ENCODE measurements at regions of chr1 and their contacts with region 1.

Region 1: GRCh38 chr1:6199298-6200187 is at the start of gene RPL22:
- DNase-seq: peak; percentile 96
- H3K4me3 Mint-ChIP-seq: peak within 1 kb of the TSS; percentile 94
- H3K27ac Mint-ChIP-seq: peak within 1 kb of the TSS; percentile 92
- H3K4me1 Mint-ChIP-seq: peaks cover 44% of the 10 kb centered on the region
- H3K27me3 Mint-ChIP-seq: peaks cover 2% of the 10 kb centered on the region
- total RNA-seq, gene RPL22: 421 and 457 TPM in 2 replicates

Region 2: DNA sequence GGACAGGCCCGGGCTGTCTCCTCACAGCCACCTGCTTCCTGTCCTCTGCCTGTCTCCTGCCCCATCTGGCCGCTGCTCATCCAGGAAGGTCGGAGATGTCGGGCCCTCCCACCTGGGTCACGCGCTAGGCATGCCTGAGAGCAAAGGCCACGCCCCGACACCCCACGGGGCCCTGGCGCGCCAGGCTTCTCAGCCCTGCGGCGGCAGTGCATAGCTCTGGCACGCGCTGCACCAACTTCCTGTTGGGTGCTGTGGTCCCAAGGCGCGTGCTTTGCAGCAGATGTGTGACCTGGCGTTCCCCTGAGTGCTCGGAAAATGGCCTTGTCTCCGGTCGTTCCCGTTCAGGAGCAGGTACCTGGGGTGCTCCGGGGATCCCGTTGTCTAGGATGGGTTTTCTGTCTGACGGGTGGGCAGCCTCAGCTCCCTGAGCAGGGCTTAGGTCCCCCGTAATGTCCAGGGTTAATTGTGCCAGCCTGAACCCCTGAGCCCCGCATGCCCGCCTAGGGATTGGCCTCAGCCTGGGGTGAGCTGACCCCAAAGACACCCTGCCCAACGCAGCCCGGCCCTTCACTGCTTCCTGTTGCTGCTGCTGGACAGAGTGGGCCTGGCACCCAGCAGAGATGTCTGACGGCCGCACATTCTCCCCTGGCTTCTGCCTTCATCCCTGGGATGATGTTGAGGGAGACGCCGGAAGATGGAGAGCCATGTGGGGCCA is 173.3 kb before region 1 on chr1:
- intact Hi-C with region 1: loop called (anchors 1 kb)
- DNase-seq: peak; percentile 90
- H3K4me3 Mint-ChIP-seq: peak overlapping the region; percentile 97
- H3K27ac Mint-ChIP-seq: peak overlapping the region; percentile 94
- H3K4me1 Mint-ChIP-seq: peaks cover 50% of the 10 kb centered on the region
- H3K27me3 Mint-ChIP-seq: no peaks in the 10 kb centered on the region

Region 3: GRCh38 chr1:6059866-6060265 is 139.7 kb before region 1 on chr1:
- intact Hi-C with region 1: no loop called
- DNase-seq: no peak
- H3K4me3 Mint-ChIP-seq: no peak overlapping the region
- H3K27ac Mint-ChIP-seq: no peak overlapping the region
- H3K4me1 Mint-ChIP-seq: peaks cover 4% of the 10 kb centered on the region
- H3K27me3 Mint-ChIP-seq: peaks cover 1% of the 10 kb centered on the region

Region 4: GRCh38 chr1:6148497-6149241 is 50.9 kb before region 1 on chr1:
- intact Hi-C with region 1: loop called (anchors 1 kb)
- DNase-seq: peak; percentile 51
- H3K4me3 Mint-ChIP-seq: peak overlapping the region; percentile 47
- H3K27ac Mint-ChIP-seq: no peak overlapping the region
- H3K4me1 Mint-ChIP-seq: no peaks in the 10 kb centered on the region
- H3K27me3 Mint-ChIP-seq: peaks cover 2% of the 10 kb centered on the region

Region 5: DNA sequence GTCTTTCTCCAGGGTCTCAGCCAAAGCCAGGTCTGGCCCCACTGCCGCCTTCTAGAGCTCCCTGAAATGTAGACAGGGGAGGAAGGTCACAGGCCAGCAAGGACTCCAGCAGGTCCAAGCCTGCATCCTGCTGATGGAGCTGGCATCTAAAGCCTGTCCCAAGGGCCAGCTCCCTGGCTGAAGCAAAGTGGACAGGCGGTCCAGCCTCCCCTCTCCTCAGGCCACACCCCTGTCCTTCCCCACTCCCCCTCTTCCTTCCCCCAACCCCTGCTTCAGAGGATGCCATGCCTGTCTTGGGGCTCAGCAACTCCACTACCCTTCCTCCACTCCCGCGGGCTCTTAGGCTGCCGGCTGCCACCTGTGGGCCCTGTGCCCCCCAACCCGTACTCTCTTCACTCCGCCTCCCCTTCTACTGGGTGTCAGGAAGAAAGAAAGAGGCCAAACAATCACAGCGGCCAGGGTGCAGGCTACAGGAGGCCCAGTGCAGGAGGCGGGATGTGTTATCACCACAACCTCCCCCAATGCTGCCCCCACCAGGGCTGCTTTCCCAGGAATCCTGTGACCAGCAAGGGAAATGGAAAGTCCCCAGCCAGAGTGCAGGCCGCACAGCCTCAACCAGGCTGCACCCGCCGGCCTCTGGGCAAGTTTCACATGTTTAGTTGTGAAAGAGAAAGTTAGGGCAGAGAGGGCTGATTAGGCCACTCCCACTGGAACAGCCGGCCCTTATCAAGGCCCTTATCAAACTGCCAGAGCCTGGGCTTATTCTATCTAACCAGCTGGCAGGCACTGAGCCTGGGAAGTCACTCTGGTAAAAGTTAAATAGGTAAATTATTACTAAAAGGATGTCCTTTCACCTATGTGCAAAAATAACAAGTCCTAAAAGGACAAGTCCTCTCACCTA is 159.9 kb after region 1 on chr1:
- intact Hi-C with region 1: loop called (anchors 1 kb)
- DNase-seq: peak; percentile 57
- H3K4me3 Mint-ChIP-seq: peak overlapping the region; percentile 64
- H3K27ac Mint-ChIP-seq: peak overlapping the region; percentile 89
- H3K4me1 Mint-ChIP-seq: peaks cover 46% of the 10 kb centered on the region
- H3K27me3 Mint-ChIP-seq: no peaks in the 10 kb centered on the region

Region 6: GRCh38 chr1:6554031-6554906 is 354.7 kb after region 1 on chr1 and contains the start of gene NOL9:
- intact Hi-C with region 1: loop called (anchors 1 kb)
- DNase-seq: peak; percentile 93
- H3K4me3 Mint-ChIP-seq: peak within 1 kb of the TSS; percentile 87
- H3K27ac Mint-ChIP-seq: peak within 1 kb of the TSS; percentile 81
- H3K4me1 Mint-ChIP-seq: peaks cover 7% of the 10 kb centered on the region
- H3K27me3 Mint-ChIP-seq: no peaks in the 10 kb centered on the region
- total RNA-seq, gene NOL9: 50.4 and 58.9 TPM in 2 replicates